ENCODE measurements at regions of chr17 and their contacts with region 1.

Region 1: DNA sequence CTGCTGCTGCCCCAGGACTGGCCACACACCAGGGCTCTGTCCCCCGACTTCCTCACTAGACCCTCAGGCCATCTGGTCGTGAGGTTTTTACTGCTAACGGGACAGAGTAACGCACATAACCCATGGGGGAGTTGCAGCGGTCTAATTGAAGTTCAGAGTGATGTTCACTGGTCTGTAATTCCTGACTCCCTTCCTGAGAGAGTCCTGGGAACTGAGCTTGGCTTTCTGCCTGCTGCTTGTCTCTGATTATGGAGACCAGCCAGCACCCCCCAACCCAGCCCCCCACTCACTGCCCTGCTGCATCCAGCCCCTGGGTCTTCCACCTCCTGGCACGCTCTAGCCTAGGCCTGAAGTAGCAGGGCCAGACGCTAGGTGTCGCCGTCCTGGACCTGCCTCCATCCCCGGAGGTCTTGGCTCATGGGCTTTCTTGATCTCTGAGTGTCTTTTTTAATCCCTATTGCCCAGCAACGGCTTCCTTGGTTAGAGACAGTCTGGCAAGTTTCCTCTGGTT is 192.9 kb downstream of the CCDC182 start:
- DNase-seq: peak; percentile 94
- H3K4me3 ChIP-seq: peak overlapping the region; percentile 62
- H3K27ac ChIP-seq: peak overlapping the region; percentile 99
- H3K4me1 ChIP-seq: peaks cover 93% of the 10 kb centered on the region
- CTCF ChIP-seq: peak; percentile 90

Region 2: GRCh38 chr17:57255776-57256681 is 296.1 kb before region 1 on chr17 and contains the start of gene MSI2:
- CTCF ChIA-PET with region 1: interaction called, 6 read pairs
- POLR2A ChIA-PET with region 1: interaction called, 5 read pairs
- intact Hi-C with region 1: loop called (anchors 2 kb)
- DNase-seq: peak; percentile 89
- H3K4me3 ChIP-seq: peak within 1 kb of the TSS; percentile 81
- H3K27ac ChIP-seq: peak within 1 kb of the TSS; percentile 76
- H3K4me1 ChIP-seq: peaks cover 26% of the 10 kb centered on the region
- CTCF ChIP-seq: no peak
- total RNA-seq, gene MSI2: 131 and 226 TPM in 2 replicates

Region 3: DNA sequence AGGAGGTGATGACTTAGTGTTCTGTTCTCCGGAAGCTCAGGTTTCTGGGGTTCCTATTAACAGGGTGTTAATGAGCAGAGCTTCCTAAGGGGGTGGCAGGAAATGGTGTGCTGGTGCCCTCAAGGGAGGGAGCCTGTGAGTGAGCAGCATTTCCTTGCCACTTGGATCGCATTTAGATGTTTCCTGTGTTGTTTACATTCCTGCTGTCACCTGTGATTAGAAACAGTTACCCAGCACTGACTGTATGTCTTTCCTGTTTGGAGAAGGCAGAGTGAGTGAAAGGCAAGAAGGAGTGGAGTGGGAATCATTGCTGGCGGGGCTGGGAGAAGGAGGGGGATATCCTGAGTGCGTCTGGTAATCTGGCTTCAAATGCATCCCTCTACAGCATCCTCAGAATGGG is 21.7 kb before region 1 on chr17:
- CTCF ChIA-PET with region 1: interaction called, 15 read pairs
- POLR2A ChIA-PET with region 1: interaction called, 7 read pairs
- intact Hi-C with region 1: no loop called
- DNase-seq: peak; percentile 30
- H3K4me3 ChIP-seq: no peak overlapping the region
- H3K27ac ChIP-seq: peak overlapping the region; percentile 3
- H3K4me1 ChIP-seq: peaks cover 64% of the 10 kb centered on the region
- CTCF ChIP-seq: no peak

Region 4: GRCh38 chr17:57622683-57623433 is 70.7 kb after region 1 on chr17:
- CTCF ChIA-PET with region 1: interaction called, 8 read pairs
- POLR2A ChIA-PET with region 1: interaction called, 18 read pairs
- intact Hi-C with region 1: no loop called
- DNase-seq: peak; percentile 88
- H3K4me3 ChIP-seq: peak overlapping the region; percentile 50
- H3K27ac ChIP-seq: peak overlapping the region; percentile 76
- H3K4me1 ChIP-seq: peaks cover 52% of the 10 kb centered on the region
- CTCF ChIP-seq: no peak

Region 5: DNA sequence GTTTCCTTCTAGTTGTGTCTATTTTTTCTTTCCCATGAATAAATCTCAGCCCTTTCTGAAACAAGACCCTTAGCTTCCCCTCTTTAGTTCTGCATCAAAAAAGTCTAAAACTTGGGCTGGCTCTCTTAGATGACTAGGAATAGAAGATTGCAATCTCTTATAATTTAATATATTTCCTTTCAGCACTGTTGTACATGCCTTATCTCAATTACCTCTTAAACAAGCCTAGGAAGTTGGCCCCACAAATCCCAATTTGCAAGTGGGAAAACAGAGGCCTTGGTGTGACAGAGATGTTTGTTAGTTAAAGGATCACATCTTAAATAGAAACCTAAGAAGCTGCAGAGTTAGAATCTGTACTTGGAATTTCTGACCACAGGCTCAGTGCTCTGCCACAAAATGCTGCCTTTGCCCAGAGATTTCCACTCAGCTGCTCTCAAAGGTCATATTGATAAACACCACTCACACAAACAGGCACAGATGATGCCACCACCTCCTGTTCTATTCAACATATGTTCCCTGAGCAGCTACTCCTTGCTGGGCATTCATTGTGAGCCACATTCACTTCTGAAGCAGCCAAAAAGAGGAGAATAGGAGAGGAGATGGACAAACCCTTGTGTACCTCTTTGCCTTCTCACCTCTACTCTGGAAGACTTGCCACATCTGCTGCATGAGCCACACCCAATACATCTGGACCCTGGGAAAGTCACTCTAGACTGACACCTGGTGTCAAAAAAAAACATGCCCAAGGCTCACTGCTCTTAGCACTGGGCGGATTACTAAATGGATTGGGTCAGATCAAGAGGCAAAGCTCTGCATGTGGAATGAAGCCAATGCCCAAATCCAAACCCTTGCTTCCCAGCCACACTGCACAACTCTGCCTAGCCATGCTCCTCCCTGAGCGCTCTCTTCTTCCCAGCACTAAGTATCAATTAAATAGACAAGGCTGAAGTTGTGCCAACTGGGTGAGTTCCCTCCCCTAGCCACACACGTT is 187.5 kb after region 1 on chr17:
- CTCF ChIA-PET with region 1: no interaction called
- POLR2A ChIA-PET with region 1: no interaction called
- intact Hi-C with region 1: loop called (anchors 5 kb)
- DNase-seq: peak; percentile 69
- H3K4me3 ChIP-seq: no peak overlapping the region
- H3K27ac ChIP-seq: no peak overlapping the region
- H3K4me1 ChIP-seq: peaks cover 22% of the 10 kb centered on the region
- CTCF ChIP-seq: peak; percentile 83

Measured in OCI-LY7 (cell line).